Activated T-helper 2 cell treated with anti-CD3 and anti-CD28 coated beads, Interferon-gamma antibody, Interleukin-2, Interleukin-4, amounts not matched to agents 10 μg/mL and 5 μg/mL and 100 μg/mL, durations not matched to agents 14 hours and 24 hours and 36 hours (primary cell): ENCODE measurements at regions of chr18 and their contacts with region 1.

Region 1: DNA sequence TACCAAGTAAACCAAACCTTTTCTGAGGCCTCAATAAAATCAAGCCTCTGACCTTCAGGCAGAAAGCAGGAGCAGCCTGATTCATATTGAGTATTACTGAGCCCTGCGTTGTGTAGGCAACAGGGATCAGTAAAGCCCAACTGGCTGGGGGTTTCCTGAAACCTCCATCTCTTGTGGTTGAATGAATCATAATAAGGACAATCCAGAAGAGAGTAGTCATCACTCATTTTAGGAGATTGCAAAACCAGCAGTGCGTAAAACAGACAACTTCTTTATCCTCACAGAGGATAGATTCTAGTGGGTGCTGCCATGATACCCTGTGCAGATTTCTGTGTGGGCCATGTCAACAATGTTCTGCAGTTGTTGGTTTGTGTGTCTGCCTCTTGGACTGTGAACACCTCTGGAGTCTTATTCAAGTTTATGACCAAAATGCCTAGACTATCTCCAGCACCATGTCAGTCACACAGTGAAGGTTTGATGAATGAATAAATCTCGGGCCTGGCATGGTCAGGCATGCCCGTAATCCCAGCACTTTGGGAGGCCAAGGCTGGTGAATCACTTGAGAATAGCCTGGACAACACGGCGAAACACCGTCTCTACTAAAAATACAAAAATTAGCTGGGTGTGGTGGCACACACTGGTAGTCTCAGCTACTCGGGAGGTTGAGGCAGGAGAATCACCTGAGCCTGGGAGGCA is 51.8 kb upstream of the RAB27B start:
- DNase-seq: no peak
- H3K4me3 Mint-ChIP-seq: no peak overlapping the region
- H3K27ac Mint-ChIP-seq: peak overlapping the region; percentile 77
- H3K4me1 Mint-ChIP-seq: peaks cover 29% of the 10 kb centered on the region
- H3K27me3 Mint-ChIP-seq: peaks cover 10% of the 10 kb centered on the region

Region 2: GRCh38 chr18:54712306-54712705 is 64.1 kb before region 1 on chr18:
- intact Hi-C with region 1: loop called (anchors 1 kb)
- DNase-seq: no peak
- H3K4me3 Mint-ChIP-seq: no peak overlapping the region
- H3K27ac Mint-ChIP-seq: no peak overlapping the region
- H3K4me1 Mint-ChIP-seq: peaks cover 48% of the 10 kb centered on the region
- H3K27me3 Mint-ChIP-seq: peaks cover 43% of the 10 kb centered on the region

Region 3: DNA sequence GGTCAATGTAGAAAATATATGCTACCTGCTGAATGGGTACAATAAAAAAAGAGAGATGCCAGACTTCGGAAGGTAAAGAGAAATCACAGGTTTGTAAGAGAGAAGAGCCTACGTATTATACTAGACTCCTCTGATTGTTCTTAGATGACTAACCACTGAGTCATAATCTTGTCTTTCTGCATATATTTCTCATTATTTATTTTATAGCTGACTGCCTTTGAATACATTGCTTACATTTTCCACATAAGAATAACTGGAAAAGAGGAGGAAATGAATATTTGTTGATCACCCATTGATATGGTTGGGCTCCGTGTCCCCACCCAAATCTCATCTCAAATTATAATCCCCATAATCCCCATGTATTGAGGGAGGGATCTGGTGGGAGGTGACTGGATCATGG is 38.4 kb before region 1 on chr18:
- intact Hi-C with region 1: loop called (anchors 1 kb)
- DNase-seq: no peak
- H3K4me3 Mint-ChIP-seq: no peak overlapping the region
- H3K27ac Mint-ChIP-seq: peak overlapping the region; percentile 63
- H3K4me1 Mint-ChIP-seq: peaks cover 5% of the 10 kb centered on the region
- H3K27me3 Mint-ChIP-seq: peaks cover 27% of the 10 kb centered on the region

Region 4: DNA sequence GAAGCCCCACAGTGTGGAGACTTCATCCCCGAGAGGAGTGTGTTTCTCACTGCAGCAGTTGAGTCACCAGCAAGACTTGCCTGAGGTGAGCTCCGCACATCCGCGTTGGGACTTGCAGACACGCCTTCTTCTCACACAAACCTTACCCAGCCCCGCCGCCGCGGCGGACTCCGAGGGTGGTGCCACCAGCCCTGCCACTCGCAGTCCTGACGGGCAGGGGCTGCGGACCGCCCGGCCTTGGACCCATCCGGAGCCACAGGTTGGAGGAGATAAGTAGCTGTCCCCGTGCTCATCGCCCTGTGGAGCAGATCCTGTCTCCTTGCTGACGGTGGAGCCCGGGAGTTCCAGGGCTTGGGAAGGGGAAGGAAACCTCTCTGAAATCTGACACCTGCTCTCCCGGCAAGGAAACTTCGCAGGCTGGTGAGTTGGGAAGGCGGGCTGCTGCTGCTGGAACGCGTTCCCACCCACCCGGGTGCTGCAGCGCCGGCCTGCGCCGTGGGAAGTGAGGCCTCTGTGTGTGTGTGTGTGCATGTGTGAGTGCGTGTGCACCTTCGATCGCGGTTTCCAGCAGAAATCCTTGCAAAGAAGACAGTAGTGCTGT is 52.0 kb after region 1 on chr18 and contains the start of gene RAB27B:
- intact Hi-C with region 1: loop called (anchors 1 kb)
- DNase-seq: peak; percentile 60
- H3K4me3 Mint-ChIP-seq: peak within 1 kb of the TSS; percentile 82
- H3K27ac Mint-ChIP-seq: peak within 1 kb of the TSS; percentile 3
- H3K4me1 Mint-ChIP-seq: peaks cover 19% of the 10 kb centered on the region
- H3K27me3 Mint-ChIP-seq: peaks cover 25% of the 10 kb centered on the region
- total RNA-seq, gene RAB27B: 0.75 and 0.92 TPM in 2 replicates

Region 5: GRCh38 chr18:54852780-54853675 is 76.6 kb after region 1 on chr18:
- intact Hi-C with region 1: loop called (anchors 1 kb)
- DNase-seq: no peak
- H3K4me3 Mint-ChIP-seq: peak overlapping the region; percentile 6
- H3K27ac Mint-ChIP-seq: no peak overlapping the region
- H3K4me1 Mint-ChIP-seq: peaks cover 22% of the 10 kb centered on the region
- H3K27me3 Mint-ChIP-seq: peaks cover 6% of the 10 kb centered on the region